Mucosa of descending colon (tissue), 3 donors: ENCODE measurements at regions of chr4 and their contacts with region 1.

Region 1: GRCh38 chr4:111854494-111855087 is 290.7 kb upstream of the FAM241A start:
- DNase-seq: peak in 1 of 3 donors; percentile 28
- ATAC-seq: peak; percentile 51
- H3K4me3 ChIP-seq: no peak overlapping the region
- H3K4me1 ChIP-seq: no peaks in the 10 kb centered on the region
- CTCF ChIP-seq: no peak

Region 2: DNA sequence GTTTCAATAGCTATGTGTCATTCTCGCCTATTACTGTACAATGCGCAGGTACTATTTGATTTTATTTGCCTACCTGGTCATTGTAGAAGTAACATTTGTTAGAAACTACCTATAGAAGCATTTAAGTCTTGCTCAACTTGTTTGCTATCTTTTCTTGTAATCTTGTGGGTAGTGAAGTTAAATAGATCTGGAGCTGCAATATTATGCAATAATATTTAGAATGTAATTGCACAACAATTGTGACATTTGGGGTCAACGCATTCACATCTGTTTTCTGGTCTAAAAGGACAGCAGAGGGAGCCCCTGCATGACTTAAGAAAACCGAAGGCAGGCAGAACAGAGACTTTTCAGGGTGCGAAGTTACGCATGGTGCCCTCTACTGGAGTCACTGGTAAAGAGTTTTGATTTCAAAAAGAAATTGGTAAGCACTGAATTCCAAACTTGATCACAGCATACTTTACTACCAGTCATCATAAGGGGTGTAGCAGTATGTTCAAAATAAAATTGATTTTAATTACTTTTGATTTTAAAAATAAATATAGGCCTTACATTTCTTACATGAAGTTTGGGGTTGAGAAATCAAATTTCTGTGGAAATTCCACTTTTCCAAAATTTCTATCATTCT is 212.5 kb before region 1 on chr4:
- intact Hi-C with region 1: loop called (anchors 5 kb)
- DNase-seq: peak in 2 of 3 donors; percentile 30 to 80
- ATAC-seq: peak; percentile 81
- H3K4me3 ChIP-seq: no peak overlapping the region
- H3K4me1 ChIP-seq: no peaks in the 10 kb centered on the region
- CTCF ChIP-seq: peak; percentile 37